Mammary epithelial cell (primary cell): ENCODE measurements at regions of chrX and their contacts with region 1.

Region 1: GRCh38 chrX:47523297-47523696 is 37.7 kb upstream of the ARAF start:
- DNase-seq: peak; percentile 36
- H3K4me3 ChIP-seq: peak overlapping the region; percentile 24 to 53 (median 48)
- H3K27ac ChIP-seq: no peak overlapping the region
- H3K4me1 ChIP-seq: peaks cover 3% of the 10 kb centered on the region
- H3K27me3 ChIP-seq: no peaks in the 10 kb centered on the region
- CTCF ChIP-seq: peak; percentile 50 to 78

Region 2: DNA sequence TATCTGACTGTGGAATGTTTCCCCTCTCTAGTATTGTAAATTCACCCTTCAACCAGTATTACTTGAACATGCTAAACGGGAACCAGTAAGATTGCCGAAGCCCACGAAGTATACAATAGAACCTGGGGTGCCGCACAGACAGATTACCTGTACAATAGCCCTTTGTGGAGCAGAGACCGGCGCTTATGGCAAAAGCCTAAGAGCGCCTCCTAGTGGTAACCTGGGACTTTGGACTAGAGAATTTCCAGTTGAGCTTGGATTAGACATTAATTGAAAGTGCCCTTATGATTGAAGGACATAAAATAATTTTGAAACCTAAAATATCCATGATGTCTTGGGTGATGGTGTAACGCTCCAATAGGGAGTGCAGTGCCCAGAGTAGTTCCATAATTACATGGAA is 138.8 kb before region 1 on chrX:
- CTCF ChIA-PET with region 1: no interaction called
- dilution Hi-C with region 1: no loop called
- in situ Hi-C with region 1: no loop called
- intact Hi-C with region 1: loop called (anchors 5 kb)
- DNase-seq: peak; percentile 56
- H3K4me3 ChIP-seq: no peak overlapping the region
- H3K27ac ChIP-seq: no peak overlapping the region
- H3K4me1 ChIP-seq: no peaks in the 10 kb centered on the region
- H3K27me3 ChIP-seq: no peaks in the 10 kb centered on the region
- CTCF ChIP-seq: peak; percentile 63 to 74

Region 3: DNA sequence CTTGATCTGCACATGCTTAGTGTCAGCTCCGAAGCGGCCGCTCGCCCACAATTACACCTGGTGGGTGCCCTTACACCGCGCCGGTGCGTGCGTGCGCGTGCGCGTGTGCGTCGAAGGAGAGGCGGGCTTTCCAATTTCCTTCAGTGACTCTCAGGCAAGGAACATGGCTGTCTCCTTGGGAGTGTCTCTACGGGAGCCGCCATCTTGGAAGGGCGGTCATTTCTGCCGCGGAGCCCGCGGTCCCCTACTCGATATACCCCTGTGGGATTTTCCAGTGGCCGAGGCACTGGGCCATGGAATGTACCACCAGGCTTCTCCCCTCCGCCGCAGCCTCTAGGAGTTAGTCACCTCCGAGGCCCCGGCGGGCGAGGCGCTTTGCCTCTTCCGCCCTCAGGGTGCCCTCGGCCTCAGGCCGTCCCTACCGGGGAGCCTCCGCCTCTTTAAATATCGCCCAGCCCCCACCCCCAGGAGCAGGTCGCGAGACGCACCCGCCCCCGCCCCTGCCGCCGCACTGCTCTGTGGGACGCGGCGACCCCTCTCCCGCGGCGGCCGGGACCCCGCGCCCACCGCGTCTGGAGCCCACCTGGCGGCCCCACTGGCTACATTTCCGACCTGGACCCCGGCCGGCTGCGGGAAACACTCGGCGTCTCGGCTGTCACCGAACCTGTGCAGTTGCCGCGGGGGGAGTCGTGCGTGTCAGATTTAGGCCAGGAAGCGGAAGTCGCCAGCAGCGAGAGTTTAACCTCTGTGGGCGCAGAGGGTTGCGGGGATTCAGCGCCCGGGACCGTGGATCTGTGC is 40.6 kb before region 1 on chrX and contains the start of gene ZNF41:
- CTCF ChIA-PET with region 1: no interaction called
- dilution Hi-C with region 1: no loop called
- in situ Hi-C with region 1: no loop called
- intact Hi-C with region 1: loop called (anchors 5 kb)
- DNase-seq: peak; percentile 86
- H3K4me3 ChIP-seq: peak within 1 kb of the TSS; percentile 62 to 71 (median 70)
- H3K27ac ChIP-seq: peak within 1 kb of the TSS; percentile 48
- H3K4me1 ChIP-seq: no peaks in the 10 kb centered on the region
- H3K27me3 ChIP-seq: no peaks in the 10 kb centered on the region
- CTCF ChIP-seq: no peak
- total RNA-seq, gene ZNF41: 6.0 to 9.5 TPM

Region 4: DNA sequence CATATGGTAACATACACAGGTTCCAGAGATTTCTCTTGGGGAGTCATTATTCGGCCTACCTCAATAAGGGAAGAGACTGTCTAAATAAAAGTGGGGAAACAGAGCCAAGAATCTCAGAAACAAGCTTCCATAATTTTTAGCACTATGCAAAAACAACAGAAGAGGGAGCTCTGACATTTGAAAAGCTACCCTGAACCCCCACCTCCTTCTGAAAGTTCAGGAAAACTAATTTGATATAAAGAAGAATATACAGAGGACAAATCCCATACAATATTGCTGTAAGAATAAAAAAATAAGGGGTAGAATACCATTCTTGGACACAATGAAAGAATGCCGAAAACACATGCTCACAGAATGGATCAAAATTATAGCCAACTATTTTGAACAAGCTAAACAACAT is 26.0 kb before region 1 on chrX:
- CTCF ChIA-PET with region 1: interaction called, 7 read pairs
- dilution Hi-C with region 1: no loop called
- in situ Hi-C with region 1: no loop called
- intact Hi-C with region 1: loop called (anchors 1 kb)
- DNase-seq: no peak
- H3K4me3 ChIP-seq: no peak overlapping the region
- H3K27ac ChIP-seq: no peak overlapping the region
- H3K4me1 ChIP-seq: peaks cover 6% of the 10 kb centered on the region
- H3K27me3 ChIP-seq: no peaks in the 10 kb centered on the region
- CTCF ChIP-seq: peak in 1 of 2 donors; percentile 49

Region 5: GRCh38 chrX:47571215-47571614 is 47.9 kb after region 1 on chrX:
- CTCF ChIA-PET with region 1: no interaction called
- dilution Hi-C with region 1: no loop called
- in situ Hi-C with region 1: no loop called
- intact Hi-C with region 1: no loop called
- DNase-seq: no peak
- H3K4me3 ChIP-seq: no peak overlapping the region
- H3K27ac ChIP-seq: no peak overlapping the region
- H3K4me1 ChIP-seq: peaks cover 11% of the 10 kb centered on the region
- H3K27me3 ChIP-seq: no peaks in the 10 kb centered on the region
- CTCF ChIP-seq: no peak

Region 6: DNA sequence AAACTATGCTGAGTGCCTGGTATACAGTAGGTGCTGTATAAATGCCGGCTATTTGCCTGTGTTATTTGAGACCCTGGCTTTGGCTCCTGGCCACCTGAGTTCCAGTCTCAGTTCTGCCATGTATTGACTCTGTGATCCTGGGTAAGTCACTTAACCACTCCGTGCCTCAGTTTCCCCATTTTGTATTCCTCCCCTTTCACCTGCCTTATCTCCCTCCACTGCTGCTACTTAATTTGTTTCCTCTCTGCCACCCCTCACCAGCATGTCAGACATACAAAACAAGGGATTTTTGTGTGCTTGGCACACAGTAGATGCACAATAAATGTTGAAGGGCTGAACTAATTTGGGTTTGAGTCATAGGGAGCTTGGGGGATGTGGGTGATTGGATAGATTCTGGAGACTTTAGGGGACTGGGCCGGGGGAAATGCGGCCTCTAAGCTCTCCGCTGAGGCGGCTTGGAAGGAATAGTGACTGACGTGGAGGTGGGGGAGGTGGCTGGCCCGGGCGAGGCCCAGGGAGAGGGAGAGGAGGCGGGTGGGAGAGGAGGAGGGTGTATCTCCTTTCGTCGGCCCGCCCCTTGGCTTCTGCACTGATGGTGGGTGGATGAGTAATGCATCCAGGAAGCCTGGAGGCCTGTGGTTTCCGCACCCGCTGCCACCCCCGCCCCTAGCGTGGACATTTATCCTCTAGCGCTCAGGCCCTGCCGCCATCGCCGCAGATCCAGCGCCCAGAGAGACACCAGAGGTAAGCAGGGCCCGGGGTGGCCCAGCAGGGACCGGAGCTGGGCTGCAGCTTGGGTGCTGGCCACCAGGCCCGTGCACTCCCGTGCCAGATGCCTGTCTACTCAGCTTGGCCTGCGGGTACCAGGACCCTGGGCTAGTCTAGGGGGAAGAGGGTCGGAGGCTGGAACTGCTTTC is 58.7 kb after region 1 on chrX and contains the start of gene TIMP1:
- CTCF ChIA-PET with region 1: no interaction called
- dilution Hi-C with region 1: loop called (anchors 10 kb)
- in situ Hi-C with region 1: no loop called
- intact Hi-C with region 1: no loop called
- DNase-seq: peak; percentile 85
- H3K4me3 ChIP-seq: peak within 1 kb of the TSS; percentile 57 to 80 (median 61)
- H3K27ac ChIP-seq: peak within 1 kb of the TSS; percentile 32
- H3K4me1 ChIP-seq: peaks cover 17% of the 10 kb centered on the region
- H3K27me3 ChIP-seq: no peaks in the 10 kb centered on the region
- CTCF ChIP-seq: no peak
- total RNA-seq, gene TIMP1: 170 to 219 TPM